ENCODE measurements at regions of chr17 and their contacts with region 1.

Region 1: GRCh38 chr17:34163646-34164045 is 91.4 kb upstream of the CCL2 start:
- DNase-seq: peak in 1 of 2 experiments; percentile 9
- H3K4me3 ChIP-seq: no peak overlapping the region
- H3K4me3 Mint-ChIP-seq: no peak overlapping the region
- H3K27ac Mint-ChIP-seq: no peak overlapping the region
- H3K4me1 ChIP-seq: no peaks in the 10 kb centered on the region
- H3K4me1 Mint-ChIP-seq: no peaks in the 10 kb centered on the region
- H3K27me3 ChIP-seq: no peaks in the 10 kb centered on the region
- H3K27me3 Mint-ChIP-seq: peaks cover 12% of the 10 kb centered on the region
- CTCF ChIP-seq: peak; percentile 58 to 63

Region 2: GRCh38 chr17:33964344-33964979 is 199.2 kb before region 1 on chr17:
- CTCF ChIA-PET with region 1: no interaction called
- POLR2A ChIA-PET with region 1: no interaction called
- intact Hi-C with region 1: loop called (anchors 1 kb)
- DNase-seq: peak in 1 of 2 experiments; percentile 16
- H3K4me3 ChIP-seq: no peak overlapping the region
- H3K4me3 Mint-ChIP-seq: no peak overlapping the region
- H3K27ac Mint-ChIP-seq: no peak overlapping the region
- H3K4me1 ChIP-seq: no peaks in the 10 kb centered on the region
- H3K4me1 Mint-ChIP-seq: no peaks in the 10 kb centered on the region
- H3K27me3 ChIP-seq: no peaks in the 10 kb centered on the region
- H3K27me3 Mint-ChIP-seq: peaks cover 21% of the 10 kb centered on the region
- CTCF ChIP-seq: peak in 1 of 2 experiments; percentile 25

Region 3: GRCh38 chr17:34081269-34081668 is 82.4 kb before region 1 on chr17:
- CTCF ChIA-PET with region 1: no interaction called
- POLR2A ChIA-PET with region 1: no interaction called
- intact Hi-C with region 1: loop called (anchors 1 kb)
- DNase-seq: peak in 1 of 2 experiments; percentile 30
- H3K4me3 ChIP-seq: no peak overlapping the region
- H3K4me3 Mint-ChIP-seq: no peak overlapping the region
- H3K27ac Mint-ChIP-seq: no peak overlapping the region
- H3K4me1 ChIP-seq: no peaks in the 10 kb centered on the region
- H3K4me1 Mint-ChIP-seq: no peaks in the 10 kb centered on the region
- H3K27me3 ChIP-seq: no peaks in the 10 kb centered on the region; the same call in 1 of the 2 replicates
- H3K27me3 Mint-ChIP-seq: peaks cover 17% of the 10 kb centered on the region
- CTCF ChIP-seq: peak; percentile 48 to 58

Region 4: DNA sequence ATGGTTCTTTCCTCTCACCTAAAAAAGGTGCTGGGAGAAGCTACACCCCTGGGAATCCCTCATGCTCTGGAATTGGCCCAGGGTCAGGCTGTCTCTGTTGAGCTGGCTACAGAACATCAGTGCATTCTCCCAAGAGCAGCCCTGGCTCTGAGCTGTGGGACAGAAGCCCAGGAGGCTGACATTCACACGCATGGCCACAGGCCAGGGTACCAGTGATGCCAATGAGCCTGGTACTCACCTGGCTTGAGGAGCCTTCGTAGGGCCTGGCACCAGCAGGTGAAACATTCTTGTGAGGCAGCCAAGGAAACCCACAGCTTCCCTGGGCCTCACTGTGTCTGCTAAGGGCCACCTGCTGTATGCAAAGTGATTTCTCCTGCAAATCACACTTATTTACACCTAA is 30.3 kb before region 1 on chr17:
- CTCF ChIA-PET with region 1: no interaction called
- POLR2A ChIA-PET with region 1: no interaction called
- intact Hi-C with region 1: no loop called
- DNase-seq: no peak
- H3K4me3 ChIP-seq: no peak overlapping the region
- H3K4me3 Mint-ChIP-seq: no peak overlapping the region
- H3K27ac Mint-ChIP-seq: no peak overlapping the region
- H3K4me1 ChIP-seq: no peaks in the 10 kb centered on the region
- H3K4me1 Mint-ChIP-seq: no peaks in the 10 kb centered on the region
- H3K27me3 ChIP-seq: no peaks in the 10 kb centered on the region
- H3K27me3 Mint-ChIP-seq: peaks cover 15% of the 10 kb centered on the region
- CTCF ChIP-seq: no peak